ENCODE measurements at regions of chr11 and their contacts with region 1.

Region 1: GRCh38 chr11:77602381-77603088 is 12.8 kb downstream of the AQP11 start:
- DNase-seq: peak; percentile 72
- ATAC-seq: peak; percentile 44
- H3K4me3 ChIP-seq: no peak overlapping the region
- H3K27ac ChIP-seq: peak overlapping the region; percentile 4
- H3K4me1 ChIP-seq: peaks cover 12% of the 10 kb centered on the region
- H3K27me3 ChIP-seq: no peaks in the 10 kb centered on the region
- CTCF ChIP-seq: no peak
- EP300 ChIP-seq: no peak
- POLR2A ChIP-seq: no peak
- RAD21 ChIP-seq: no peak

Region 2: DNA sequence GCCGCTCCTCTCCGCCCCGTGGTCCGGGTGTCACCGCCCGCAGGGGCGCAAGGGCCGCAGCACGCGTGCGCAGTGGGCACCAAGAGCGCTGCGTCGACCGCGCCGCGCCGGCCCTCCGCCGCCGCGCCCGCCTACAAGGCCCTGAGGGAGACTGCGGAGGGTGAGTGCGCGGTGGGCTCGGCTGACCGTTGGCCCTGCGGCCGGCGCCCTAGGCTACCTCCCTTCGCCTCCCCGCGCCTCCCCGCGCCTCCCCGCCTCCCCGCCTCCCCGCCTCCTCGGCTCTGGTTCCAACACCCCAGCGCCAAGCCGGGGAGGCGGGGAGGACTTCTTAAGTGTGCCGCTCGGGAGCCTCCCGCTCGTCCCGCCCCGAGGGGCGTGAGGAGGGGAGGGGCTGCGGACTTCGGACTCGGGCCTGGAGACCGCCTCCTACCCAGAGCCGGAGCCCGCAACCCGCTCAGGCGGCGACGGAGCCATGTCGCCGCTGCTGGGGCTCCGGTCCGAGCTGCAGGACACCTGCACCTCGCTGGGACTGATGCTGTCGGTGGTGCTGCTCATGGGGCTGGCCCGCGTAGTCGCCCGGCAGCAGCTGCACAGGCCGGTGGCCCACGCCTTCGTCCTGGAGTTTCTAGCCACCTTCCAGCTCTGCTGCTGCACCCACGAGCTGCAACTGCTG is 12.9 kb before region 1 on chr11 and contains the start of gene AQP11:
- CTCF ChIA-PET with region 1: no interaction called
- POLR2A ChIA-PET with region 1: interaction called, 16 read pairs
- in situ Hi-C with region 1: no loop called
- intact Hi-C with region 1: no loop called
- DNase-seq: peak; percentile 86
- ATAC-seq: peak; percentile 87
- H3K4me3 ChIP-seq: peak within 1 kb of the TSS; percentile 68 to 87 (median 77)
- H3K27ac ChIP-seq: peak within 1 kb of the TSS; percentile 90
- H3K4me1 ChIP-seq: peaks cover 47% of the 10 kb centered on the region
- H3K27me3 ChIP-seq: no peaks in the 10 kb centered on the region
- CTCF ChIP-seq: peak; percentile 15; the same call in 1 of the 2 replicates
- EP300 ChIP-seq: peak in 1 of 2 experiments; percentile 65; a peak in 1 of 4 replicates
- POLR2A ChIP-seq: peak; percentile 84 to 92
- RAD21 ChIP-seq: peak; percentile 37; the same call in 1 of the 2 replicates
- total RNA-seq, gene AQP11: 8.5 and 15.3 TPM in 2 replicates

Region 3: DNA sequence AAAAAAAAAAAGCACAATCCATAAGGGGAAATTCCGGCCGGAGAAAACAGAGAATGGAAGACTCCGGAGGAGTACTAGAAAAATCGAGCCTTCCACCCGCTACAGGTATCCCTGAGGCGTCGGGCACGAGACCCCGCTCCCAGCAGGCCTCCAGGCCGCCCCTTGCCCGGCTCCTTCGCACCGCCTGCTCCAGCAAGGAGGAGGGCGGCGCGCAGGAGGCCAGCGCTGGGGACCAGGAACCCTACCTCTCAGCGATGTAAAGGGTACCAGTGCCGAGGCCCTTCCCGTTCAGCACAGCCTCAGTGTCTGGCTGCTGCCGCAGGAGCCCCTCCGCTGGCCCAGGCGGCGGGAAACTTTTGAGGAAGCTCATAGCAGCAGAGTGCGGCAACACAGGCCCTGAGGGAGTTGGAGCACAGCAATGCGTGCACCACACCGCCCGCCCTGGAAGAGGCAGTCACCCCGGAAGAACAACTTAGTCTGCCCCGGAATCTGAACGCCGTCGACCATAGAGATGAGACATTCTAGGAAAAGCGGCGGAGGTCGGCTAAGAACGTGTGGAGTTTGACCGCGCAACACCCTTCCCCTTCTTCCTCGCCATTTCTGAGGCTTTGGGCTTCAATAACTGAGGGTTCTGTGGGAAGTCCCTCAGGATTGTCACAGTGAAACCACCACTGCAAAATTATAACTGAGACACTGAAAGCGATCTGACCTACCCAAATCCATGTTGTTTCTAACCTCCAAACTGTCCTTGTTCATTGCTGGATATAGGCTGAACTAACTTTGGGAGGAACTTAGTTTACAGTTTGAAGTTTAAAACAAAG is 35.0 kb after region 1 on chr11 and contains the start of gene CLNS1A:
- CTCF ChIA-PET with region 1: no interaction called
- POLR2A ChIA-PET with region 1: no interaction called
- in situ Hi-C with region 1: no loop called
- intact Hi-C with region 1: no loop called
- DNase-seq: peak; percentile 87
- ATAC-seq: peak; percentile 99
- H3K4me3 ChIP-seq: peak within 1 kb of the TSS; percentile 82 to 90 (median 88)
- H3K27ac ChIP-seq: peak within 1 kb of the TSS; percentile 85
- H3K4me1 ChIP-seq: peaks cover 54% of the 10 kb centered on the region
- H3K27me3 ChIP-seq: no peaks in the 10 kb centered on the region
- CTCF ChIP-seq: no peak
- EP300 ChIP-seq: peak in 1 of 2 experiments; percentile 32; a peak in 1 of 4 replicates
- POLR2A ChIP-seq: peak; percentile 89 to 94
- RAD21 ChIP-seq: 0 out of 2 replicates have a peak, but pooled peaks have one; percentile 16
- total RNA-seq, gene CLNS1A: 219 and 267 TPM in 2 replicates

Region 4: GRCh38 chr11:77705195-77705876 is 102.8 kb after region 1 on chr11:
- CTCF ChIA-PET with region 1: no interaction called
- POLR2A ChIA-PET with region 1: no interaction called
- in situ Hi-C with region 1: no loop called
- intact Hi-C with region 1: no loop called
- DNase-seq: peak; percentile 71
- ATAC-seq: peak; percentile 71
- H3K4me3 ChIP-seq: no peak overlapping the region
- H3K27ac ChIP-seq: peak overlapping the region; percentile 36
- H3K4me1 ChIP-seq: peaks cover 33% of the 10 kb centered on the region
- H3K27me3 ChIP-seq: no peaks in the 10 kb centered on the region
- CTCF ChIP-seq: no peak
- EP300 ChIP-seq: no peak
- POLR2A ChIP-seq: no peak
- RAD21 ChIP-seq: no peak